HCT116 (cell line): ENCODE measurements at regions of chr1 and their contacts with region 1.

Region 1: DNA sequence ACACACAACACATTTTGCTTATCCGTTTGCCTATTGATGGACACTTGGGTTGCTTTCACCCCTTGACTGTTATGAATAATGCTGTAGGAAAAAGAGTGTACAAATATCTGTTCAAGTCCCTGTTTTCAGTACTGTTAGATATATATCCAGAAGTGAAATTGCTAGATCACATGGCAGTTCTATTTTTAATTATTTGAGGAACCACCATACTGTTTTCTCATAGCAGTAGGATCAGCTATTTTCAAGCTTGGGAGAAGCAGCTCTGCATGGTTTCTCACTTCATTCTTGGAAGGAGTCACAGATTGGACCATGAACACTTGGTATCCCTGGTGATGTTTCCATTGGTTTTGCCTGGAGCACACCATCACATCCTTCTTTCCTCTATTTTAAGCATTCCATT is 114.4 kb upstream of the ZP4 start:
- DNase-seq: no peak
- ATAC-seq: no peak
- H3K4me3 ChIP-seq: no peak overlapping the region
- H3K27ac ChIP-seq: no peak overlapping the region
- H3K4me1 ChIP-seq: no peaks in the 10 kb centered on the region
- H3K27me3 ChIP-seq: no peaks in the 10 kb centered on the region
- CTCF ChIP-seq: no peak
- POLR2A ChIP-seq: no peak
- RAD21 ChIP-seq: no peak

Region 2: GRCh38 chr1:238099871-238100270 is 94.8 kb after region 1 on chr1:
- CTCF ChIA-PET with region 1: no interaction called
- POLR2A ChIA-PET with region 1: no interaction called
- RAD21 ChIA-PET with region 1: no interaction called
- intact Hi-C with region 1: loop called (anchors 10 kb)
- DNase-seq: no peak
- ATAC-seq: no peak
- H3K4me3 ChIP-seq: no peak overlapping the region
- H3K27ac ChIP-seq: no peak overlapping the region
- H3K4me1 ChIP-seq: no peaks in the 10 kb centered on the region
- H3K27me3 ChIP-seq: no peaks in the 10 kb centered on the region
- CTCF ChIP-seq: no peak
- POLR2A ChIP-seq: no peak
- RAD21 ChIP-seq: no peak